Calu3 (cell line): ENCODE measurements at regions of chr3 and their contacts with region 1.

Region 1: DNA sequence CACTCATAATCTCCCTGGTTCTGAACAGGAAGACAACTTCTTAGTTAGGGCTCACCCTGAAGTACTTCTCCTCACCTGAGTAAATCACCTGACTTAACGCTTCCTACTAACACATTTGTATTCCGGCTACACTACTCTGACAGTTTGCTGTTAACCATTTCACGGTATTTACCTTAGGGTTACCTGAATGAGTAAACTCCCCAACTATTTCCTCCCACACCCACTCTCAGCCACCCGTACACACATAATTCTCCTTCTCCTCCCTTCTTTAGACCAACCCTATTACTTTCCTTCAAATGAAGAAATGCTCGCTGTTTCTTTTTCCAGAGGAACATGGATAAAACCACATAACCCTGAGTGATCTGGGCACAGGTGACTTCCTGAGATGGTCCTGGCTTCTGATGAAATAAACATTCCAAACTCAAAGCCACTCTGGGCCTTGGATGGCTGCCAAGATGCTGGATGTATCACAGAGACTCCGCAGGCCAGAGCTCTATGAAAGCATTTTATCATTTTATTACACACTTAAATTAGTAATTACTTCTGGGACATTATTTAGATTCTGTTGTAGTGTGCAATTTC is 183.6 kb upstream of the ATP11B start:
- DNase-seq: peak; percentile 84
- H3K4me3 Mint-ChIP-seq: peak overlapping the region; percentile 55
- H3K27ac Mint-ChIP-seq: peak overlapping the region; percentile 79
- H3K4me1 Mint-ChIP-seq: peaks cover 65% of the 10 kb centered on the region
- H3K27me3 Mint-ChIP-seq: no peaks in the 10 kb centered on the region
- CTCF ChIP-seq: no peak

Region 2: GRCh38 chr3:182294256-182294655 is 315.4 kb before region 1 on chr3:
- CTCF ChIA-PET with region 1: no interaction called
- intact Hi-C with region 1: loop called (anchors 5 kb)
- DNase-seq: no peak
- H3K4me3 Mint-ChIP-seq: no peak overlapping the region
- H3K27ac Mint-ChIP-seq: no peak overlapping the region
- H3K4me1 Mint-ChIP-seq: peaks cover 46% of the 10 kb centered on the region
- H3K27me3 Mint-ChIP-seq: no peaks in the 10 kb centered on the region
- CTCF ChIP-seq: no peak

Region 3: GRCh38 chr3:182490596-182491491 is 118.8 kb before region 1 on chr3:
- CTCF ChIA-PET with region 1: interaction called, 3 read pairs
- intact Hi-C with region 1: loop called (anchors 5 kb)
- DNase-seq: peak; percentile 54
- H3K4me3 Mint-ChIP-seq: no peak overlapping the region
- H3K27ac Mint-ChIP-seq: no peak overlapping the region
- H3K4me1 Mint-ChIP-seq: peaks cover 24% of the 10 kb centered on the region
- H3K27me3 Mint-ChIP-seq: no peaks in the 10 kb centered on the region
- CTCF ChIP-seq: peak; percentile 70

Region 4: DNA sequence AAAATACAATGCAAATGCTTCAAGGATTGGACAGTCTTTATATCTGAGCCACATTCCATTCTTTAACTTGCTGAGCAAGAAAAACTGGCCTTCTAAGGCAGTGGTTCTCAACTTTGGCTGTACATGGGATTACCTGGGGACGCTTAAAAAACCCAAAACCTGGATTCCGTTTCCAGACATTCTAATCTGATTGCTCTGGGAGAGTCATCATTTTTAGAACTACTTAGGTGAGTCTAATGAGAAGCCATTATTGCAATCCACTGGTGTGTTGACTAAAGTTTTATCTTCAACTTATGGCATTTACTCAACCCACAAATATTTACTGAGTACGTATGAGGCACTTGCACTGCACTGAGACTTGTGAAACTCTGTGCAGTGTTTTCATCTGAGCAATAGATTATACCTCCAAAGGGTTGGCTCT is 12.0 kb before region 1 on chr3:
- CTCF ChIA-PET with region 1: interaction called, 10 read pairs
- intact Hi-C with region 1: no loop called
- DNase-seq: peak; percentile 48
- H3K4me3 Mint-ChIP-seq: no peak overlapping the region
- H3K27ac Mint-ChIP-seq: peak overlapping the region; percentile 35
- H3K4me1 Mint-ChIP-seq: peaks cover 28% of the 10 kb centered on the region
- H3K27me3 Mint-ChIP-seq: no peaks in the 10 kb centered on the region
- CTCF ChIP-seq: no peak